ENCODE measurements at regions of chr19 and their contacts with region 1.

Region 1: DNA sequence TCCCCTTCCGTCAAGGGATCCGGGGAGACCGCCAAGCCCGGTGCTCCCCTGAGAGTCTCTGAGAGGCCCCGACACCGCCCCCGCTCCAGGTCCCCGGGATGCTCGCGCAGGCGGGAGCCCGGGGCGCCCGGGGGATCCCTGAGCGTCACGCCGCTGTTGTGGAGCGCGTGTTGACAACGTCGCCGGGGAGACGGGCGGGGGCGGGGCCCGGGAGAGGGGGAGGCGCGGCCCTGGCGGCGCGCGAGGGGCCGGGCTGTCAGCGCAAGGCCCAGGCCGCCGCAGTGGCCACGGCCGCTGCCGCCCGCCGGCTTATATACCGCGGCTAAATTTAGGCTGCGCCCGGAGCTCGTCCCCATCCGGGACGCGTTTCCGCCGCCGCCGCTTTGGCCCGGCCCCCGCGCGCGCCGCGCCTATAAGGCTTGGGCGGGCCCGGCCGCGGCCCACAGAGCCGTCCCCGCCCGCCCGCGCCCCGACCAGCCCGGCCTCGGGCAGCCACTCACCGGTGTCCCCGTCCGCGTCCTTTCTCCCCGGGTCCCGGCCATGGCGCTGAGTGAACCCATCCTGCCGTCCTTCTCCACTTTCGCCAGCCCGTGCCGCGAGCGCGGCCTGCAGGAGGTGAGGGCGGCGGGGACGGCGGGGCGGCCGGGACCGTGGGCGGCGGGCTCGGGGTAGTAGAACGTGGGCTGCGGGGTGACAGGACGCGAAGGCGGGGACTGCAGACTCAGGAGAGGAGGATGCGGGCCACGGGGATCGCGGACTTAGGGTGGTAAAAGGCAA is at the start of gene KLF2:
- DNase-seq: peak; percentile 92 to 98 (median 97)
- ATAC-seq: peak; percentile 58
- H3K4me3 ChIP-seq: peak within 1 kb of the TSS; percentile 87 to 100
- H3K4me3 Mint-ChIP-seq: peak within 1 kb of the TSS; percentile 77
- H3K27ac ChIP-seq: peak within 1 kb of the TSS; percentile 94 to 99
- H3K27ac Mint-ChIP-seq: peak within 1 kb of the TSS; percentile 82
- H3K4me1 ChIP-seq: peaks cover 36% of the 10 kb centered on the region
- H3K4me1 Mint-ChIP-seq: peaks cover 40% of the 10 kb centered on the region
- H3K27me3 ChIP-seq: no peaks in the 10 kb centered on the region
- H3K27me3 Mint-ChIP-seq: no peaks in the 10 kb centered on the region
- CTCF ChIP-seq: no peak
- total RNA-seq, gene KLF2: 817 to 847 TPM

Region 2: DNA sequence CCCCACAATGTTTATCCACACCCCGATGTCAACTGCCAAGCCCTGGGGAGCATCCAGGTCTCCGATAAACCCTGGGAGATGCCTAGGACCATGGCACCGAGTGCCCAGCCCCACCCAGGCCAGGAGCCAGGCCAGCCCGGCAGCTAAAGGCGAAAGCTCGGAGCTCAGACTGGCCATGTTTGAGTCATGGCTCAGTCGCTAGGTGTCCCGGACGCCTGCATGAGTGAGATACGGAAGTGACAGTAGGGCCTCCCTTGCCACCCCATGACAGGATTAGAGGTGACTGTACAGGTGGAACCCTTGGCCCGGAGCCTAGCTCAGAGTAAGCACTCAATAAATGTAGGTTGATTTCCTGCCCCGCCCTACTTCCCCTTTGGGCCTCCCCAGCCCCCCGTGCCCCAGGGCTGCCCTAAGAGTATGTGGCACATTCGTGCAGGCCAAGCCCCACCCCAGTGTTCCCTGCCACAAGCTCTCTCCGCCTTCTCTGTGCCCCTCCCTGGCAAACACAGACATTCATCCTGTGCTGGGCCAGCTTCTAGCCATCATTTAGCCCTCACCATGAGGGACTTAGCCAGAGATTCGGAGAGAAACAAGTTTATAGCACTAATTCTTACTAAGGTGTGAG is 254.1 kb before region 1 on chr19:
- CTCF ChIA-PET with region 1: no interaction called
- POLR2A ChIA-PET with region 1: interaction called, 7 read pairs
- intact Hi-C with region 1: loop called in 1 of 2 experiments (anchors 5 kb)
- DNase-seq: peak; percentile 67 to 96 (median 88)
- ATAC-seq: peak; percentile 91
- H3K4me3 ChIP-seq: peak overlapping the region; percentile 38 to 47
- H3K4me3 Mint-ChIP-seq: peak overlapping the region; percentile 78
- H3K27ac ChIP-seq: peak overlapping the region; percentile 82 to 97
- H3K27ac Mint-ChIP-seq: no peak overlapping the region
- H3K4me1 ChIP-seq: peaks cover 63% of the 10 kb centered on the region
- H3K4me1 Mint-ChIP-seq: peaks cover 40% of the 10 kb centered on the region
- H3K27me3 ChIP-seq: no peaks in the 10 kb centered on the region
- H3K27me3 Mint-ChIP-seq: no peaks in the 10 kb centered on the region
- CTCF ChIP-seq: peak; percentile 38

Region 3: DNA sequence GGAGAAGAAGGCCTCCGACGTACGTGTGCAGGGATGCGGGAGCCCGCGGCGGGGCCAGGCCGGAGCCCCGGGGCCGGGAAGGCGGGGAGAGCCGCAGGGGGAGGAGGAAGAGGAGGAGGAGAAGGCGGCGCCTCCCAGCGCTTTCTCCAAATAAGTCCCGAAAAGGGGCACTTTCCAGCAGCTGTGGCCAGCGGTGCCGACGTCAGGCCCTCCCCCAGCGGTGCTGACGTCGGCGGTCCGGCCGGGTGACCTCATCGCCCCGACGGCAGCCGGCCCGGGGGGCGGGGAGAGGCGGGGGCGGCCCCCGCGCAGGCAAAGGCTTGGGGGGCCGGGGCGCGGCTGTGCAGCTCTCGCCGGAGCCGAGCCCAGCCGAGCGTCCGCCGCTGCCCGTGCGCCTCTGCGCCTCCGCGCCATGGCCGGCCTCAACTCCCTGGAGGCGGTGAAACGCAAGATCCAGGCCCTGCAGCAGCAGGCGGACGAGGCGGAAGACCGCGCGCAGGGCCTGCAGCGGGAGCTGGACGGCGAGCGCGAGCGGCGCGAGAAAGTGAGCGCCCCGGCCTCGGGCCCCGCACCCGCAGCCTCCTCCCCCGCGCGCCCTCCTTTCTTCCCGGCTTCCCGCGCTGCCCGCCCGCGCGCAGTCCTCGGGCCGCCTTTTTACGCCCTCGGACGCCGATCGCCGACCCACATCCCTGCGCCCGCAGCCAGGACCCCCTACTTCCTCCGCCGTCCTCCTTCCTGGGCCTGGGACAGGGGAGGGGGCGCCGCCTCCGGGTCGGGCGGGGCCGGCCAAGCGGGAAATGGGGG is 248.2 kb before region 1 on chr19 and contains the start of gene TPM4:
- CTCF ChIA-PET with region 1: no interaction called
- POLR2A ChIA-PET with region 1: interaction called, 7 read pairs
- intact Hi-C with region 1: loop called (anchors 1 to 5 kb)
- DNase-seq: peak; percentile 57 to 94 (median 81)
- ATAC-seq: peak; percentile 48
- H3K4me3 ChIP-seq: peak within 1 kb of the TSS; percentile 59 to 79
- H3K4me3 Mint-ChIP-seq: peak within 1 kb of the TSS; percentile 79
- H3K27ac ChIP-seq: peak within 1 kb of the TSS; percentile 64 to 92
- H3K27ac Mint-ChIP-seq: peak within 1 kb of the TSS; percentile 96
- H3K4me1 ChIP-seq: peaks cover 81% of the 10 kb centered on the region
- H3K4me1 Mint-ChIP-seq: peaks cover 74% of the 10 kb centered on the region
- H3K27me3 ChIP-seq: no peaks in the 10 kb centered on the region
- H3K27me3 Mint-ChIP-seq: no peaks in the 10 kb centered on the region
- CTCF ChIP-seq: no peak
- total RNA-seq, gene TPM4: 187 to 199 TPM

Region 4: DNA sequence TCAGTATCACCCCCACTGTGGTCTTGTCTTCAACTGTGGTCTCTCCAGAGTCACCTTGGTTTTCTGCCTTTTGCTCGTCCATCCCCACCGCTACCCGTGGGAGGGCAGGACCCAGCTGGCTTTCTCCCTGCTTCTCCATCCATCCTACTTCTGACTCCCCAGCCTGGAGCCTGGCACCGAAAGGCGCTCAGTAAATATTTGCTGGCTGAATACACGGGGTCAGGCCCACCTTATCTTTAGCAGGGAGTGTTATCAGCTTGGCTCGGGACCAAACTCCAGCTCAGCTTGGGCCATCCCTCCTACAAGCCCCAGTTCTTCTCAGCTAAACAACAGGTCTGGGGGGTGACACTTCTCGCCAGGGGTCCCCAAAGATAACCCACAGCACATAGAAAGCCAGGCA is 62.0 kb before region 1 on chr19:
- CTCF ChIA-PET with region 1: interaction called, 3 read pairs
- POLR2A ChIA-PET with region 1: interaction called, 37 read pairs
- intact Hi-C with region 1: loop called in 1 of 2 experiments (anchors 5 kb)
- DNase-seq: no peak
- ATAC-seq: no peak
- H3K4me3 ChIP-seq: no peak overlapping the region
- H3K4me3 Mint-ChIP-seq: peak overlapping the region; percentile 54
- H3K27ac ChIP-seq: no peak overlapping the region
- H3K27ac Mint-ChIP-seq: no peak overlapping the region
- H3K4me1 ChIP-seq: peaks cover 68% of the 10 kb centered on the region
- H3K4me1 Mint-ChIP-seq: peaks cover 63% of the 10 kb centered on the region
- H3K27me3 ChIP-seq: no peaks in the 10 kb centered on the region
- H3K27me3 Mint-ChIP-seq: no peaks in the 10 kb centered on the region
- CTCF ChIP-seq: no peak

Region 5: GRCh38 chr19:16283210-16284061 is 41.1 kb before region 1 on chr19:
- CTCF ChIA-PET with region 1: no interaction called
- POLR2A ChIA-PET with region 1: interaction called, 5 read pairs
- intact Hi-C with region 1: loop called (anchors 5 kb)
- DNase-seq: peak; percentile 24 to 79 (median 58)
- ATAC-seq: peak; percentile 88
- H3K4me3 ChIP-seq: peak overlapping the region; percentile 29 to 35
- H3K4me3 Mint-ChIP-seq: peak overlapping the region; percentile 66
- H3K27ac ChIP-seq: peak overlapping the region; percentile 41 to 70
- H3K27ac Mint-ChIP-seq: peak overlapping the region; percentile 84
- H3K4me1 ChIP-seq: peaks cover 34% of the 10 kb centered on the region
- H3K4me1 Mint-ChIP-seq: peaks cover 34% of the 10 kb centered on the region
- H3K27me3 ChIP-seq: no peaks in the 10 kb centered on the region
- H3K27me3 Mint-ChIP-seq: no peaks in the 10 kb centered on the region
- CTCF ChIP-seq: no peak

Region 6: DNA sequence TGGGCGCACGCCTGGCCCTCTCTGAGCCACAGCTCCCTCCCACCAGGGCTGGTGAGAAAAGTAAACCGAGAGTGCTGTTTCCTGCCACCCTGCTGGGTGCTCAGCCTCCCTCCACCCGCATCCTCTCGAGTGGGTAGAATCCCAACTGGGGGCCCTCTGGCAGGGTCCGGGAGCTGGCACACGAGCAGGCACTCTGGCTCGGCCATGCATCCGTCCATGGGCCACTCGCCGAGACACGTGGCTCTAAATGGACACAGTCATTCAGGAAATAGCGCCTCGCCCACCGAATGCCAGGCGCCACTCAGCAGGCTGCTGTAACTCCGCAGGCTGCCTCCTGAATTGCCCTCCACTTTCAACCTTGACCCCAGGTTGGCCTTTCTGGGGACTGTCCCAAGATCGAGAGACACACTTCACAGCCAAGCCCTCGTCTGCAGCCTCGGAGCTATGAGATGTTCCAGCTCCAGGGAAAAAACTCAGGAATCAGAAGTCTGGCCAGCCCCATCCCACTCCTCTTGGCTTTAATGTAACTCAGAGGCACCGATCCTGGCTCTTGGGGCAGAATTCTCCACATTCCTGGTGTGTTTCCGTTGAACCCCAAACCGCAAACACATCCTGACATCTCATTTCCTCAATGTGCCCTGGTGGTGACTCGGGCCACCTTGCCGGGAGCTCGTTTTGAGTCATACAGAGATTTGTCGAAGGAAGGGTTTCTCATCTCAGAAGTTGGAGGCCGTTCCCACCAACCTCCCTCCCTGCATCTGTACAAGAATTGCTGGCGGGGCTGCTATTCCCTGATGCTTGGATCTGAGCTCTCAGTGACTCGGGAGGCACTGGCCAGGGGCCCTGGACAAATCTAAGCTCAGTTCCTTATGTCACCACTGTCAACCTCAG is 14.1 kb after region 1 on chr19:
- CTCF ChIA-PET with region 1: interaction called, 23 read pairs
- POLR2A ChIA-PET with region 1: interaction called, 178 read pairs
- intact Hi-C with region 1: no loop called
- DNase-seq: peak in 6 of 9 experiments; percentile 55 to 83 (median 62)
- ATAC-seq: peak; percentile 49
- H3K4me3 ChIP-seq: peak overlapping the region; percentile 25 to 38
- H3K4me3 Mint-ChIP-seq: peak overlapping the region; percentile 81
- H3K27ac ChIP-seq: peak overlapping the region; percentile 28 to 76
- H3K27ac Mint-ChIP-seq: peak overlapping the region; percentile 94
- H3K4me1 ChIP-seq: peaks cover 71% of the 10 kb centered on the region
- H3K4me1 Mint-ChIP-seq: peaks cover 61% of the 10 kb centered on the region
- H3K27me3 ChIP-seq: no peaks in the 10 kb centered on the region
- H3K27me3 Mint-ChIP-seq: no peaks in the 10 kb centered on the region
- CTCF ChIP-seq: no peak

Region 7: GRCh38 chr19:16371540-16371986 is 47.0 kb after region 1 on chr19:
- CTCF ChIA-PET with region 1: interaction called, 200 read pairs
- POLR2A ChIA-PET with region 1: interaction called, 2,627 read pairs
- intact Hi-C with region 1: loop called in 1 of 2 experiments (anchors 1 kb)
- DNase-seq: peak; percentile 87 to 97 (median 92)
- ATAC-seq: peak; percentile 41
- H3K4me3 ChIP-seq: peak overlapping the region; percentile 33 to 44
- H3K4me3 Mint-ChIP-seq: no peak overlapping the region
- H3K27ac ChIP-seq: peak overlapping the region; percentile 91 to 95
- H3K27ac Mint-ChIP-seq: no peak overlapping the region
- H3K4me1 ChIP-seq: peaks cover 95% of the 10 kb centered on the region
- H3K4me1 Mint-ChIP-seq: peaks cover 68% of the 10 kb centered on the region
- H3K27me3 ChIP-seq: no peaks in the 10 kb centered on the region
- H3K27me3 Mint-ChIP-seq: no peaks in the 10 kb centered on the region
- CTCF ChIP-seq: no peak

Measured in CD8-positive, alpha-beta T cell (primary cell).